Heart left ventricle (tissue), 16 donors: ENCODE measurements at regions of chr16 and their contacts with region 1.

Region 1: GRCh38 chr16:527006-527753 is at the start of gene CAPN15:
- DNase-seq: peak; percentile 88 to 94 (median 90)
- ATAC-seq: peak; percentile 60 to 89 (median 84)
- H3K4me3 ChIP-seq: peak within 1 kb of the TSS; percentile 58 to 94 (median 76)
- H3K27ac ChIP-seq: peak within 1 kb of the TSS; percentile 89 to 100 (median 98)
- H3K4me1 ChIP-seq: peaks cover 11 to 59% (median 39%) of the 10 kb centered on the region in 12 donors
- H3K27me3 ChIP-seq: no peaks in the 10 kb centered on the region
- CTCF ChIP-seq: peak in 5 of 12 donors; percentile 6 to 33 (median 26)
- POLR2A ChIP-seq: peak in 1 of 2 donors; percentile 91
- total RNA-seq, gene CAPN15: 12.0 to 35.5 (median 20.0) TPM

Region 2: DNA sequence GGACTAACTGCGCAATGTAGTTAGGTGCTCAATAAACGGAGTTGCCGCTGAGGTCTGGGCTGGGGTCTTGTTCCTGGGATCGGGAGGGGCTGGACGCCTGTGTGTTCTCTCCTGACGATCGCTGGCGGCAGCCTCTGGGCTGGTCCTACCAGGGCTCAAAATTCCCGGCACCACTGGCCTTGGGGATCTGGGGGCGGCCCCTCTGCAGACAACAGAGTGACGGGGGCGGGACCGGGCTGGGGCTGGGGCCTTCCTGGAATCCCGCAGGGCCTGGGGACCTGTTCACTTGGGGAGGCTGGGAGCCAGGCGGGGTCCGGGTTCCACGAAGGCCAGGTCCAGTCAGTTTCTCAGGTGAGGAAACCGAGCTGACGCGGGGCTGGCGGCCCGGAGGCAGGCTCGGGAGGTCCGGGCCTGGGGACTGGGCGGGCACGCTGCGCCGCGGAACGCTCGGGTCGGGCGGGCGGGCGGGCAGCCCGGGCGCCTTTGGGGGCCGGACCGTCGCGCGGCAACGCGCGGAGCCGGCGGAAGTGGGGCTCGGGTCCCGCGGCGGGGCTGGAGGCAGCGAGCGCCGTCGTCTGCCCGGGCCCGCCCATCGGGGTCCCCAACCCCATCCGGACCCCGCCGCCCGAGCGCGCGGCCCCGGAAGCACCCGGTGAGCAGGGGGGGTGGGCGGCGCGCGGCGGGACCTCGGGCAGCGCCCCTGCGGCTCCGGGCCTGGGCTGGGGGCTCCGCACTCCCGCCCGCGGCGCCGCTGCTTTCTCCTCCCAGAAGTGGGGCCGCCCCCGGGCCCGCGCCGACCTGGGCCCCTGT is 42.5 kb after region 1 on chr16 and contains the start of gene PIGQ:
- intact Hi-C with region 1: loop called in 1 of 10 experiments (anchors 1 kb)
- DNase-seq: peak in 4 of 5 donors; percentile 74 to 78 (median 78)
- ATAC-seq: peak; percentile 28 to 77 (median 64)
- H3K4me3 ChIP-seq: peak within 1 kb of the TSS; percentile 68 to 98 (median 84)
- H3K27ac ChIP-seq: peak within 1 kb of the TSS; percentile 47 to 90 (median 80)
- H3K4me1 ChIP-seq: peaks cover 0 to 46% (median 39%) of the 10 kb centered on the region in 12 donors
- H3K27me3 ChIP-seq: peaks cover 0 to 1% (median 0%) of the 10 kb centered on the region in 9 donors
- CTCF ChIP-seq: no peak
- POLR2A ChIP-seq: peak in 1 of 2 donors; percentile 27
- total RNA-seq, gene PIGQ: 16.4 to 39.5 (median 22.0) TPM